HCT116 (cell line): ENCODE measurements at regions of chr13 and their contacts with region 1.

Region 1: GRCh38 chr13:94549232-94550061 is 46.5 kb downstream of the TGDS start:
- DNase-seq: peak; percentile 84
- ATAC-seq: peak; percentile 94
- H3K4me3 ChIP-seq: peak overlapping the region; percentile 64 to 72
- H3K27ac ChIP-seq: peak overlapping the region; percentile 74
- H3K4me1 ChIP-seq: peaks cover 5 to 21% of the 10 kb centered on the region in 2 experiments; a peak in 3 of 4 replicates
- H3K27me3 ChIP-seq: no peaks in the 10 kb centered on the region
- CTCF ChIP-seq: no peak
- POLR2A ChIP-seq: peak; percentile 65
- RAD21 ChIP-seq: 0 out of 2 replicates have a peak, but pooled peaks have one; percentile 15

Region 2: GRCh38 chr13:94435604-94436226 is 113.7 kb before region 1 on chr13:
- CTCF ChIA-PET with region 1: interaction called, 6 read pairs
- POLR2A ChIA-PET with region 1: no interaction called
- RAD21 ChIA-PET with region 1: no interaction called
- intact Hi-C with region 1: loop called (anchors 5 kb)
- DNase-seq: peak; percentile 34
- ATAC-seq: peak; percentile 79
- H3K4me3 ChIP-seq: no peak overlapping the region
- H3K27ac ChIP-seq: no peak overlapping the region
- H3K4me1 ChIP-seq: no peaks in the 10 kb centered on the region
- H3K27me3 ChIP-seq: peaks cover 21% of the 10 kb centered on the region; the same call in 1 of the 2 replicates
- CTCF ChIP-seq: peak; percentile 38 to 67 (median 47); a peak in 5 of 6 replicates
- POLR2A ChIP-seq: no peak
- RAD21 ChIP-seq: peak; percentile 75

Region 3: GRCh38 chr13:94595950-94596574 is 46.6 kb after region 1 on chr13 and contains the start of gene TGDS:
- CTCF ChIA-PET with region 1: no interaction called
- POLR2A ChIA-PET with region 1: no interaction called
- RAD21 ChIA-PET with region 1: no interaction called
- intact Hi-C with region 1: loop called (anchors 2 kb)
- DNase-seq: peak; percentile 88
- ATAC-seq: peak; percentile 97
- H3K4me3 ChIP-seq: peak within 1 kb of the TSS; percentile 84 to 94
- H3K27ac ChIP-seq: peak within 1 kb of the TSS; percentile 56
- H3K4me1 ChIP-seq: peaks cover 10 to 19% of the 10 kb centered on the region in 2 experiments
- H3K27me3 ChIP-seq: no peaks in the 10 kb centered on the region
- CTCF ChIP-seq: no peak
- POLR2A ChIP-seq: peak; percentile 94
- RAD21 ChIP-seq: no peak
- total RNA-seq, gene TGDS: 16.9 TPM

Region 4: GRCh38 chr13:94601446-94602431 is 52.3 kb after region 1 on chr13 and contains the start of gene GPR180:
- CTCF ChIA-PET with region 1: no interaction called
- POLR2A ChIA-PET with region 1: no interaction called
- RAD21 ChIA-PET with region 1: no interaction called
- intact Hi-C with region 1: loop called (anchors 1 kb)
- DNase-seq: peak; percentile 98
- ATAC-seq: peak; percentile 98
- H3K4me3 ChIP-seq: peak within 1 kb of the TSS; percentile 69 to 85
- H3K27ac ChIP-seq: peak within 1 kb of the TSS; percentile 80
- H3K4me1 ChIP-seq: peaks cover 0 to 13% of the 10 kb centered on the region in 2 experiments; a peak in 2 of 4 replicates
- H3K27me3 ChIP-seq: no peaks in the 10 kb centered on the region
- CTCF ChIP-seq: no peak
- POLR2A ChIP-seq: peak; percentile 61
- RAD21 ChIP-seq: no peak
- total RNA-seq, gene GPR180: 6.4 TPM

Region 5: DNA sequence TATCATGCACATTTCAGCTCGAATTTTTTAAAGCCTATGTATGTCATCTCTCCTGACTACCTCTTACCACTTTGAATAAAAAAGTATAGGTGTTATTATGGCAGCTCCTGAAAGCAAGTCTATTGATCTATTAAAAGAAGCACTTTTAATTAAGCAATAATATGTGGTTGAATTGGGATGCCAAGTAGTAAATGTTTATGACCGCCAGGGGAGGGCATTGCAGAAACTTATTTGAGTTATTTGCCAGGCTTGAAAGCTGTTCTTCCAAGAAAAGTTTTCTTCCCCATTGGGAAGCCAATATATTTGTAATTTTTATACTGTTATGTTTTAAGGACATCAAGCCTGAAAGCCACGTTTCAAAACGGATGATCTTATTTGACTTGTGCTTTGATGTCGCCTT is 251.0 kb after region 1 on chr13:
- CTCF ChIA-PET with region 1: no interaction called
- POLR2A ChIA-PET with region 1: no interaction called
- RAD21 ChIA-PET with region 1: no interaction called
- intact Hi-C with region 1: no loop called
- DNase-seq: no peak
- ATAC-seq: no peak
- H3K4me3 ChIP-seq: no peak overlapping the region
- H3K27ac ChIP-seq: no peak overlapping the region
- H3K4me1 ChIP-seq: no peaks in the 10 kb centered on the region
- H3K27me3 ChIP-seq: peaks cover 19% of the 10 kb centered on the region
- CTCF ChIP-seq: no peak
- POLR2A ChIP-seq: no peak
- RAD21 ChIP-seq: no peak